ENCODE measurements at regions of chr14 and their contacts with region 1.

Region 1: DNA sequence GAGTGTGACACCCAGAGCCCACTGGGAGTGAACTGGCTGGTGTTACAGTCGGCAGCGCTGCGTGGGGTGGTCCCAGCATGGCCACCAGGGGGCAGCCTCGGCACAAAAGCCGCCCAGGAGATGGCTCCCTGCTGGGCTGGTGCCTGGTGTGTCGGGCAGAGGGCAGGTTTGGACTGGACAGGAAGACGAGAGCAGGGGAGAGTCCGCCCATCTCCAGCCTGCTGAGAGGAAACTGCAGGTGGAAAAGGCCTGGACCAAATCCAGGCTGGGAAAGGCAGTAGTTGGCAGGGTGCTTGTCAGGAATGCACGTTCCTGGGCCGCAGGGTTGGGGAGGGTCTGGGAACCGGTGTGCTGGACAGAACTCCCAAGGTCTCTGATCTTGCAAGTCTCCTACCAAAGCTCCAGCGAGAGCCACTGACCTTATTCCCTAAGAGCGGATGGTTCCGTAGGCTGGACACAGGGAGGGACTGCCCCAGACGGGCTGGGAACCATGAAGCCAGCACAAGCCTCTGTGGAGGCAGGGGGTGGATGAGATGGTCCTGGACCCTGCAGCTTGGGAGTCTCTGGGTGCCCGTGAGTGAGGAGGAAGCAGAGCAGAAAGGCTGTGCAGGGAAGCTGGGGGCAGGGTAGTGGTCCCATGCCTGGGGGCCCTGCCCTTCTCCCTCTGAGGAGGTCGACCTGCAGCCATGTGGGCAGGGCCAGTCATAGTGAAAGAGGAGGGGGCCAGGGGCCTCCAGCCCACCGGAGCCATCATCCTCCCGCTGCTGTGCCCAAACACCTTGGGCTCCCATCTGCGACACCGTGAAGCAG is 1.8 kb downstream of the AHNAK2 start:
- DNase-seq: peak; percentile 82

Region 2: GRCh38 chr14:104957146-104958113 is 19.0 kb before region 1 on chr14:
- CTCF ChIA-PET with region 1: no interaction called
- POLR2A ChIA-PET with region 1: no interaction called
- DNase-seq: no peak

Region 3: DNA sequence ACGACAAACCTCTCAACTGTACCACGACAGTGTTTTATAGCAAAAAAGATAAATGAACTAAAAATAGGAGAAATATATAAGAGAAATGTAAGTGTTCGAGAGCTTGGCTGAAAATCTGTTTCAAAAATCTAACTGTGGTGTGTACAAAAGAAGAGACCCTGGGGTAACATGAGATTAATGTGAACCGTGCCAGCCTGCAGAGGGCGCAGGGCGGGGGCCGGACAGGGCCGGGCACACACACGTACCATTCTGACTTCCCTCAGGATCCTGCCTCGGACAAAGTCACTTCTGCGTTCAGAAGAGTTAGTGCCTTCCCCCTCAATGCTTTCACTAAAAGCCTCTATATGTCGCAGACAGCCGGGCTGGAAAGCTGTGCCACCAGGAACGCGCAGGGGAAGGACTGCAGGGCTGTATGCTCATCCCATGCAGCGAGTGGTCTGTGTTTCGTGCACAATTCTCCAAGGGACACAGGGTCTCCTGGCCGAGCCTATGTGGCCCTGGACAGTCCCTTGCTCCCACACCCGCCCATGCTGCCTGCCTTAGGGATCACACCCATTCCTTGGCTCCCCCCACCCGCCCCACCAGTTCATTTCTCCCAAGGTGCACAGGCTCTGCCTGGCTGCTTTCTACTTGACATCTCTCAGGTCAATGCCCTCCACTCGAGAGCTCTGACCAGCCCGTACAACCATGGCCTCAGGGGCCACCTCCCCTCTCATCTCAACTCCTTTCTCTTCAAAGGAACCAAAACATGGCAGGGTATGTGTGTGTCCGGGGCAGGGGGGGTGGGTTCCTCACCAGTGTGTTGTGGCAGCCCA is 36.0 kb after region 1 on chr14:
- CTCF ChIA-PET with region 1: no interaction called
- POLR2A ChIA-PET with region 1: no interaction called
- DNase-seq: no peak

Region 4: GRCh38 chr14:105045710-105046326 is 69.4 kb after region 1 on chr14:
- CTCF ChIA-PET with region 1: interaction called, 42 read pairs
- POLR2A ChIA-PET with region 1: no interaction called
- DNase-seq: peak; percentile 92

Region 5: GRCh38 chr14:105075379-105076295 is 99.2 kb after region 1 on chr14:
- CTCF ChIA-PET with region 1: no interaction called
- POLR2A ChIA-PET with region 1: no interaction called
- DNase-seq: no peak

Region 6: GRCh38 chr14:105527661-105528581 is 551.5 kb after region 1 on chr14:
- CTCF ChIA-PET with region 1: no interaction called
- POLR2A ChIA-PET with region 1: no interaction called
- DNase-seq: peak; percentile 92

Measured in HEK293T (cell line).